ENCODE measurements at regions of chr19 and their contacts with region 1.

Region 1: DNA sequence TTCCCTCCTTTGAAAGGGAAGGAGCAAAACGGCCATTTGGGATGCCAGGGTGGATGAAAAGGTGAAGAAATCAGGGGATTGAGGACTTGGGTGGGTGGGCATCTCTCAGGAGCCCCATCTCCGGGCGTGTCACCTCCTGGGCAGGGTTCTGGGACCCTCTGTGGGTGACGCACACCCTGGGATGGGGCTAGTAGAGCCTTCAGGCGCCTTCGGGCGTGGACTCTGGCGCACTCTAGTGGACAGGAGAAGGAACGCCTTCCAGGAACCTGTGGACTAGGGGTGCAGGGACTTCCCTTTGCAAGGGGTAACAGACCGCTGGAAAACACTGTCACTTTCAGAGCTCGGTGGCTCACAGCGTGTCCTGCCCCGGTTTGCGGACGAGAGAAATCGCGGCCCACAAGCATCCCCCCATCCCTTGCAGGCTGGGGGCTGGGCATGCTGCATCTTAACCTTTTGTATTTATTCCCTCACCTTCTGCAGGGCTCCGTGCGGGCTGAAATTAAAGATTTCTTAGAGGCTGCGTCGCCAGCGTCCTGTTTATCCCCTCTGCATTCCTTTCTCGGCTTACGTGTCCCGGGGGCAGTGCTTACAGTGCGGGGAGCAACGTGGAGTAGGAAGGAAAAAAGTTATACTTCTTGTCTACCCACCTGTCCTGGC is 15.2 kb upstream of the S1PR4 start:
- DNase-seq: peak; percentile 61
- H3K4me3 Mint-ChIP-seq: no peak overlapping the region
- H3K27ac Mint-ChIP-seq: peak overlapping the region; percentile 59
- H3K4me1 Mint-ChIP-seq: peaks cover 51% of the 10 kb centered on the region
- H3K27me3 Mint-ChIP-seq: no peaks in the 10 kb centered on the region

Region 2: DNA sequence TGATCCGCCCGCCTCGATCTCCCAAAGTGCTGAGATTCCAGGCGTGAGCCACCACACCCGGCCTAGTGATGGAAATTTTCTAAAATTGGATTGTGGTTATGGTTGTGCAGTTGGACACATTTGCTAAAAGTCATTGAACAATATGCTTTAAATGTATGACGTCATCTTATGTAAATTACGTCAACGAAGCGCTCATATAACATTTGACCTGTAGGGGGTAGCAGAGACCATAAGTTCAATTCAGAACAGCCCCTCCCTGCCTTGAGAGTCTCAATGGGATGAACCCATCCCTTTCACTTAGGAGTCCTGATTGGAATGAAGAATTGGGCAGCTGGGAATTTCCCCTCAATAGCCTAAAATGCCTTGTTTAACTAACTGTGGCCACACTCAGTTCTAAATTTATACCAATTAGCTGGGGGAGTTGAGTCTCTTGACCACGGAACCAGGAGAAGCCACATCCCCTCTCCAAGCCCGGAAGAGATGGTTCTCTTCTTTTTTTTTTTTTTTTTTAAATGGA is 201.3 kb before region 1 on chr19:
- intact Hi-C with region 1: loop called (anchors 1 kb)
- DNase-seq: peak; percentile 57
- H3K4me3 Mint-ChIP-seq: no peak overlapping the region
- H3K27ac Mint-ChIP-seq: no peak overlapping the region
- H3K4me1 Mint-ChIP-seq: peaks cover 6% of the 10 kb centered on the region
- H3K27me3 Mint-ChIP-seq: no peaks in the 10 kb centered on the region

Region 3: DNA sequence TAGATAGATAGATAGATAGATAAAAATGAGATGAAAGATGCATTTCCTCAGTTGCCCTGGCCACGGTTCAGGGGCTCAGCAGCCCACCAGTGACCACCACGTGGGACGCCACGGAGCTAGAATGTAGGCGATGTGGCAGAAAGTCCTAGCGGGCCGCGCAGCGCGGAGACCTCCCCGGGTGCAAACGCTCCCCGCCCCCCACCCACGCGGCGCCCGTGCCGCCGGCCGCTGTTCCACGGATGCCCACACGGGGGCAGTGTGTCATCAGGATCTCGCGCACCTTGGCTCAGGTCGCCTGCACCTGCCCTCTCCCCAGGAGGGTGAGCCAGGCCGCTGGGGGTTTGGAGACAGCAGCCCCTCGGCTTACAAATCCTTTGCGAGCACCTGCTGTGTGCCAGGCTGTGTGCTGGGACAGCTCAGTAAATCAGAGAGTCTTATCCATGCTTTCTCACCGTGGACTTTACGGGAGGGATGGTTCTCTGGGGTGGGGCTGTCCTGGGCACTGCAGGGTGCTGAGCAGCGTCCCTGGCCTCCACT is 87.4 kb before region 1 on chr19:
- intact Hi-C with region 1: loop called (anchors 1 kb)
- DNase-seq: peak; percentile 54
- H3K4me3 Mint-ChIP-seq: no peak overlapping the region
- H3K27ac Mint-ChIP-seq: no peak overlapping the region
- H3K4me1 Mint-ChIP-seq: no peaks in the 10 kb centered on the region
- H3K27me3 Mint-ChIP-seq: peaks cover 7% of the 10 kb centered on the region

Region 4: DNA sequence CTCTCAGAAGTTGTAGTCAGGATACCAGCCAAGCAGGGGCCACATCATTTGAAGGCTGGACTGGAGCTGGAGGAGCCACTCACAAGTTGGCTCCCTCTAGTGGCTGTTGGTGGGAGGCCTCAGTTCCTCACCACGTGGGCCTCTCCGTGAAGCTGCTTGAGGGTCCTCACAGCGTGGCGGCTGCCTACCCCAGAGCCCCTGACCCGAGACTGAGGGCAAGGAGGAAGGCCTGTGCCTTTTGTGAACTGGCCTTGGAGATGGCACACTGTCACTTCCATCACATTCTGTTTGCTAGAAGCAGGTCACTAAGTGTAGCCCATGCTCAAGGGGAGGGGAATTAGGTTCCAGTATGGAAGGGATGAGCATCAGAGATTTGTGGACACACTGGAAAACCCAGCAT is 54.6 kb before region 1 on chr19:
- intact Hi-C with region 1: loop called (anchors 1 kb)
- DNase-seq: peak; percentile 45
- H3K4me3 Mint-ChIP-seq: no peak overlapping the region
- H3K27ac Mint-ChIP-seq: peak overlapping the region; percentile 49
- H3K4me1 Mint-ChIP-seq: peaks cover 5% of the 10 kb centered on the region
- H3K27me3 Mint-ChIP-seq: peaks cover 3% of the 10 kb centered on the region

Region 5: DNA sequence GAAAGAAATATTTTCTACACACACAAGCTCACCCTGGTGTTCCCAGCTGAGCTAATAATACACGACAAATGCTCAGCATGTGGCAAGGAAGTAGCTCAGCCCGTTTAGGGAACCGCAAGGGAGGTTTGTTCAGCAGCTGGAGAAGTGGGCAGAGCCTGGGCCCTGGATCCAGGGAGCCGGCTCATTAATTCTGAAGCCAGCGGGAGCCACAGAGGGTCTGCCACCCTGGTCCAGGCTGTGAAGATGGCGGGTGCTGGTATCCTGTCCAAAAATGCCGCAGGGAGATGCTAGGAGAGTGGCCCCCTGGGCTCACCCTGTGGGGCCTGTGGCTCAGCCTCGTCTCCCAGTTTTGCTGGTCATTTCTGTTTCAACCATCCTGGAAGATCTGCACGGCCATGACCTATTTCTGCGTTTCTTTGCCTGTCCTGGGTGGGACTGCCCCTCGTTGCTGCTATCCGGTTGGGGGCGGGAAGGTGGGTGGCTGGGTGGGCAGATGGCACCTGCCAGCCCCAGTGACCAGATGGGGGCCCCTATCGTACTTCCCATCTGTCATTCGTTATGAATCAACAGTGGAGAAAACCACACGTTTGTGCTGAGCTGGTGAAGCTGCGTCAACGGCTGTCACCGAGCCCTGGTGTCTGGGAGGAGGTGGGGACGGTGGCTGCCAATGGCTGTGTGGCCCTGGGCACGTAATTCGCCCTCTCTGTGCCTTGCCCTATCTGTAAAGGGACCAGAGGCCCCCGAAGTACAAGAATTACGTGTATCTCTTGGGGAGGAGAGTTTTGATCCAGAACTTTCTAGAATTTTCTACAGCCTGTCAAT is 30.2 kb before region 1 on chr19:
- intact Hi-C with region 1: loop called (anchors 1 kb)
- DNase-seq: peak; percentile 81
- H3K4me3 Mint-ChIP-seq: peak overlapping the region; percentile 70
- H3K27ac Mint-ChIP-seq: peak overlapping the region; percentile 96
- H3K4me1 Mint-ChIP-seq: peaks cover 30% of the 10 kb centered on the region
- H3K27me3 Mint-ChIP-seq: peaks cover 2% of the 10 kb centered on the region

Region 6: DNA sequence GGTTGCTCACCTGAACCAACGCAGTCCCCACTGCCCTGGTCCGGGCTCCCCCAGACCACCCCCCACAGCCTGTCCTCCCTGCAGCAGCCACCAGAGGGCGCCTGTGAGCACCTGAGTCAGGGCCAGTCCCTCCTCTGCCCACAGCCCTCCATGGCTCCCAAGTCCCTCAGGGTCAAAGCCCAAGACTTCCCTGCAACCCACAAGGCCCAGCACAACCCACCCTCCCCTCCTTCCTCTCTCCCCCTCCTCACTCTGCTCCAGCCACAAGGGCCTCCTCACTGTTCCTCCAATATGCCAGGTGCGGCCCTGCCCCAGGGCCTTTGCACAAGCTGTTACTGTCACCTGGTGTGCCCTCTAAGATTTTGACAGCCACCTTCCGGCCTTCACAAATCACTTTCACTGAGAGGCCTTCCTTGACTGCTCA is 16.7 kb before region 1 on chr19:
- intact Hi-C with region 1: loop called (anchors 1 kb)
- DNase-seq: peak; percentile 53
- H3K4me3 Mint-ChIP-seq: no peak overlapping the region
- H3K27ac Mint-ChIP-seq: peak overlapping the region; percentile 18
- H3K4me1 Mint-ChIP-seq: peaks cover 38% of the 10 kb centered on the region
- H3K27me3 Mint-ChIP-seq: no peaks in the 10 kb centered on the region

Region 7: DNA sequence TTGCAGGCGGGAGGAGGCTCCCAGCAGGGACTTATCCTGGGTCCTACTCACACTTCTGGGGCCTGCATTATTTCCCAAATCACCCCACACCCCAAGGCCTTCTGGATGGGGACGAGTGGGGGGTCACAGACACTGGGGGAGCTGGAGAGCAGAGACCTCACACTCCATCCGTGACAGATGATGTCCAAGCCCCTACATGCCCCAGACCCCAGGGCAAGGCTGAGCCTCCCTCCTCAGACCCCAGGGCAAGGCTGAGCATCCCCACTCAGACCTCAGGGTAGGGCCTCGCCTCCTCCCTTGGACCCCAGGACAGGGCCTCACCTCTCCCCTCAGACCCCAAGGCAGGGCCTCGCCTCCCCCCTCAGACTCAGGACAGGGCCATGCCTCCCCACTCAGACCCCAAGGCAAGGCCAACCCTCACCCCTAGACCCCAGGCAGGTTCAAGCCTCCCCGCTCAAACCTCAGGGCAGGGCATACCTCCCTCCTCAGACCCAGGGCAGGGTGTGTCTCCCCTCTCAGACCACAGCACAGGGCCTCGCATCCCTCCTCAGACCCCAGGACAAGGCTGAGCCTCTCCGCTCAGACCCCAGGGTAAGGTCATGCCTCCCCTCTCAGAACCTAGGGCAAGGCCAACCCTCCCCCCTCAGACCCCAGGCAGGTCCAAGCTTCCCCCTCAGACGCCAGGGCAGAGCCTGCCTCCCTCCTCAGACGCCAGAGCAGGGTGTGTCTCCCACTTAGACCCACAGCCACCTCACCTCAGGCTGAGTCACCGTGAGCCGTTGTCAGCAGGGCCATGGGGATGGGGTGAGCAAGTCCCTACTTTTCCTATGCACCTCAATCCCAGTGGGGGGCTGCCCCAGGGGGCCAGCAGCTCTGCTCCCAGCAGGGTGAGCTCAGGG is 13.5 kb after region 1 on chr19:
- intact Hi-C with region 1: loop called (anchors 1 kb)
- DNase-seq: peak; percentile 62
- H3K4me3 Mint-ChIP-seq: peak overlapping the region; percentile 87
- H3K27ac Mint-ChIP-seq: peak overlapping the region; percentile 90
- H3K4me1 Mint-ChIP-seq: peaks cover 26% of the 10 kb centered on the region
- H3K27me3 Mint-ChIP-seq: peaks cover 2% of the 10 kb centered on the region

Measured in activated T-helper 1 cell treated with anti-CD3 and anti-CD28 coated beads, Interleukin-12 subunit alpha, Interleukin-12 subunit beta, Interleukin-2, Interleukin-4 antibody, amounts not matched to agents 30 ng/mL and 10 ng/mL and 1 ng/mL, durations not matched to agents 14 hours and 24 hours and 36 hours (primary cell).